ENCODE measurements at regions of chr16 and their contacts with region 1.

Region 1: GRCh38 chr16:80997139-80997798 is 9.4 kb downstream of the CMC2 start:
- DNase-seq: peak; percentile 54
- H3K4me3 ChIP-seq: peak overlapping the region; percentile 10 to 51 (median 10)
- H3K27ac ChIP-seq: peak overlapping the region; percentile 51
- H3K4me1 ChIP-seq: peaks cover 31% of the 10 kb centered on the region
- H3K27me3 ChIP-seq: no peaks in the 10 kb centered on the region
- CTCF ChIP-seq: no peak
- POLR2A ChIP-seq: no peak

Region 2: GRCh38 chr16:80931801-80932712 is 65.2 kb before region 1 on chr16:
- CTCF ChIA-PET with region 1: no interaction called
- POLR2A ChIA-PET with region 1: interaction called, 6 read pairs
- dilution Hi-C with region 1: no loop called
- intact Hi-C with region 1: loop called (anchors 1 kb)
- DNase-seq: peak; percentile 59
- H3K4me3 ChIP-seq: peak overlapping the region; percentile 42 to 86 (median 63)
- H3K27ac ChIP-seq: peak overlapping the region; percentile 98
- H3K4me1 ChIP-seq: peaks cover 29% of the 10 kb centered on the region
- H3K27me3 ChIP-seq: no peaks in the 10 kb centered on the region
- CTCF ChIP-seq: peak; percentile 6 to 15
- POLR2A ChIP-seq: peak; percentile 83

Region 3: GRCh38 chr16:80974649-80975376 is 22.5 kb before region 1 on chr16:
- CTCF ChIA-PET with region 1: interaction called, 25 read pairs
- POLR2A ChIA-PET with region 1: no interaction called
- dilution Hi-C with region 1: no loop called
- intact Hi-C with region 1: no loop called
- DNase-seq: peak; percentile 15
- H3K4me3 ChIP-seq: no peak overlapping the region
- H3K27ac ChIP-seq: no peak overlapping the region
- H3K4me1 ChIP-seq: no peaks in the 10 kb centered on the region
- H3K27me3 ChIP-seq: no peaks in the 10 kb centered on the region
- CTCF ChIP-seq: peak; percentile 19 to 38
- POLR2A ChIP-seq: no peak